IMR-90 (cell line): ENCODE measurements at regions of chr1 and their contacts with region 1.

Region 1: GRCh38 chr1:96424877-96425276 is 296.7 kb upstream of the PTBP2 start:
- DNase-seq: peak; percentile 31
- ATAC-seq: no peak
- H3K4me3 ChIP-seq: no peak overlapping the region
- H3K27ac ChIP-seq: no peak overlapping the region
- H3K4me1 ChIP-seq: no peaks in the 10 kb centered on the region
- H3K27me3 ChIP-seq: no peaks in the 10 kb centered on the region
- CTCF ChIP-seq: no peak
- POLR2A ChIP-seq: no peak
- RAD21 ChIP-seq: no peak

Region 2: DNA sequence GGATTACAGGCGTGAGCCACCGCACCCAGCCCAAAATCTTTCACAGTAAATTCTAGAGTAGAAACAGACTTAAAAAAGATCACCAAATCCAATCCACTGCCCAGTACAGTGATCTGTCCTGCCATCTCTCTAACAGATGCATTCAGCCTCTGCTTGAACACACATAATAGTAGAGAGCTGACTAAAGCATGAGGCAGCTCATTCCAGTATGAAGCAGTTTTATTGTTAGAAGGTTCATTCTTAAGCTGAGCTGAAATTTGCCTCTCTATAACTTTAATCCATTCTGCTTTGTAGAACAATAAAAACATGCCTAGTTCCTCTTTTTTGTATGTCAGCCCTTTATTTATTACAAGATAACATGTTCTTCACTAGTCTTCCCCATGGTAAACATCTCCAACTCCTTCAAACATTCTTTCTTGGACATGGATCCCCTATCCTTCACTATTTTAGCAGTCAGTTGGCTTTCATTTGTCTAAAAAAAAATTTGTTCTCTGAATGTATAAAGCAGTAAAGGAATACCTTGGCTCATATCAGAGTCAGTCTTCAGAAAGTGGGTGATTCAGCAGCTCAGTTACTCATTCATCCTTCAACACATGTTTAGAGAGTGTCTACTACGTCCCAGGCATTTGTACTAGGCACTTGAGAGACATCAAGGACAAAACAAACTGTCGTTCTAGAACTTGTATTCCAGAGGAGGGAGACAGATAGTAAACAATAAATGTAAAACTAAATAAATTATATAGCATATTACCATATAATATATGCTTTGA is 286.0 kb after region 1 on chr1:
- CTCF ChIA-PET with region 1: interaction called, 12 read pairs
- POLR2A ChIA-PET with region 1: no interaction called
- dilution Hi-C with region 1: no loop called
- in situ Hi-C with region 1: no loop called
- intact Hi-C with region 1: no loop called
- DNase-seq: peak; percentile 69
- ATAC-seq: peak; percentile 83
- H3K4me3 ChIP-seq: no peak overlapping the region
- H3K27ac ChIP-seq: no peak overlapping the region
- H3K4me1 ChIP-seq: no peaks in the 10 kb centered on the region
- H3K27me3 ChIP-seq: no peaks in the 10 kb centered on the region
- CTCF ChIP-seq: no peak
- POLR2A ChIP-seq: no peak
- RAD21 ChIP-seq: no peak